Dendritic cell treated with granulocyte-macrophage colony-stimulating factor and Interleukin-4, amounts not matched to agents 40 ng/mL and 50 ng/mL, for 4 days (primary cell): ENCODE measurements at regions of chr7 and their contacts with region 1.

Region 1: GRCh38 chr7:75866489-75867389 is 12.1 kb upstream of the RHBDD2 start:
- H3K4me3 Mint-ChIP-seq: peak overlapping the region; percentile 24
- H3K27ac Mint-ChIP-seq: peak overlapping the region; percentile 75
- H3K4me1 Mint-ChIP-seq: peaks cover 71% of the 10 kb centered on the region
- H3K27me3 Mint-ChIP-seq: peaks cover 1% of the 10 kb centered on the region

Region 2: GRCh38 chr7:75814407-75814947 is 52.3 kb before region 1 on chr7:
- intact Hi-C with region 1: loop called (anchors 10 kb)
- H3K4me3 Mint-ChIP-seq: no peak overlapping the region
- H3K27ac Mint-ChIP-seq: peak overlapping the region; percentile 73
- H3K4me1 Mint-ChIP-seq: peaks cover 66% of the 10 kb centered on the region
- H3K27me3 Mint-ChIP-seq: peaks cover 2% of the 10 kb centered on the region